Activated T-helper 2 cell treated with anti-CD3 and anti-CD28 coated beads, Interferon-gamma antibody, Interleukin-2, Interleukin-4, amounts not matched to agents 10 μg/mL and 5 μg/mL and 100 μg/mL, durations not matched to agents 14 hours and 24 hours and 36 hours (primary cell): ENCODE measurements at regions of chr5 and their contacts with region 1.

Region 1: GRCh38 chr5:138035605-138036537 is 3.0 kb upstream of the FAM13B start:
- DNase-seq: peak; percentile 54
- H3K4me3 Mint-ChIP-seq: peak overlapping the region; percentile 44
- H3K27ac Mint-ChIP-seq: no peak overlapping the region
- H3K4me1 Mint-ChIP-seq: peaks cover 37% of the 10 kb centered on the region
- H3K27me3 Mint-ChIP-seq: no peaks in the 10 kb centered on the region

Region 2: GRCh38 chr5:137754126-137754960 is 281.5 kb before region 1 on chr5 and contains the start of gene HNRNPA0:
- intact Hi-C with region 1: loop called (anchors 1 kb)
- DNase-seq: peak; percentile 96
- H3K4me3 Mint-ChIP-seq: peak within 1 kb of the TSS; percentile 99
- H3K27ac Mint-ChIP-seq: peak within 1 kb of the TSS; percentile 100
- H3K4me1 Mint-ChIP-seq: peaks cover 21% of the 10 kb centered on the region
- H3K27me3 Mint-ChIP-seq: no peaks in the 10 kb centered on the region
- total RNA-seq, gene HNRNPA0: 37.2 and 37.5 TPM in 2 replicates

Region 3: DNA sequence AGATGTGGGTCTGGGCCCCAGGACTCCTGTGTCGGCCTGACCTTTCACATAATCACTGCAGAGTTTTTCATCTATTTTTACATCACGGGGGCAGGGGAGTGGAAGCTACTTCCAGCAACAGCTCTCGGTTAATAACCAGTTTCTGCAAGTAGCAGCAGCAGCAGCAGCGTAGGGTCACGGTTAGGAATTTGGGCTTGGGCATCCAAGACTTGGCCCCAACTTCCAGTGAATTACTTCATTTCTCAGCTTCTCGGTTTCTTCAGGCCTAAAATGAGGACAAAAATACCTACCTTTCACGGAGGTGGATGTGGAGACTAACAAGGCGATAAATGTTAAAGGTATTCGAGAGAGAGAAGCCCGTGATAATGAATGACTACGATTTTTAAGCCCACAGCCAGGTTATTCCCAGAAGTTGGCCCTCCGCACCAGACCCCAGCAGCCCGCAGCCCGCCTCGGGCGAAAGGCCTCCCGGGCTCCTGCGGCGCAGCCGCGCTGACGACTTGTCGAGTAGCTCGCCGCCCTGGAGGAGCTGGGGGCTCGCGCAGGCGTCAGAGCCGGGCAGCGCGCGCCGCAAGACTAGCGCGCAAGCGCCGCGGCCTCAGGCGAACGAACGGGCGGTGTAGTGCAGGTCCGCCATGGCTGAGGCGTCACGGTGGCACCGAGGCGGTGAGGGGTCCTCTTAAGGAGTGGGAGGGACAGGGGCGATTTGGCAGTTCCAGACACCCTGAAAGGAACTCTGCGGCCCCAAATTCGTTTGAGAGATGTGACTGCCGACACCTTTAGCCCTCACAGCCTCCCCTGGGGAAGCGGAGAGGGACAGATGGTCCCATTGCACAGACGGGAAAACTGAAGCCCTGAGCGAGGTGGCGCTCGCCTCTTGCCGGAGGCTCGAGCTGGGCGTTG is 146.8 kb before region 1 on chr5 and contains the start of gene PKD2L2:
- intact Hi-C with region 1: loop called (anchors 10 kb)
- DNase-seq: peak; percentile 80
- H3K4me3 Mint-ChIP-seq: peak within 1 kb of the TSS; percentile 85
- H3K27ac Mint-ChIP-seq: peak within 1 kb of the TSS; percentile 91
- H3K4me1 Mint-ChIP-seq: peaks cover 17% of the 10 kb centered on the region
- H3K27me3 Mint-ChIP-seq: no peaks in the 10 kb centered on the region
- total RNA-seq, gene PKD2L2: not detected in 2 replicates

Region 4: DNA sequence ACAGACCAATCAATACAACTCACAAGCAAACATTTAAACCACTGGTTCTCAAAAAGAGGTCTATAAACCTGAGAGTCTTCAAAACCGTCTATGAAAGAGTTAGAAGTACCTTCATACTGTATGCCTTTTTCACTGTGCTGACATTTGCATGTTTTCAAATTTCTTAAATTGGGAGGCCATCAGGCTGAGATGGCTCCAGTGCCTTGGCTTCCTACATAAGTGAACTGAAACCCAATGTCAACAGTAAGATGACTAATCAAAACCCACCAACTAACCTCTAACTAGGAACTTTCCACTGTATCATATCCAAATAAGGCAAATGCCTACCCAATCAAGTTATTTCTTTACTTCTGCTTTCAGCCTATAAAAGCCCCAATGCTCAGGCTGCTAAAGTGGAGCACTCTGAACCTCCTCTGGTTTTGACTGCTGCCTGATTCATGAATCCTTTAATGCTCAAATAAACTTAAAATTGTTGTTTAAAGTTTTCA is 38.1 kb before region 1 on chr5:
- intact Hi-C with region 1: loop called (anchors 2 kb)
- DNase-seq: no peak
- H3K4me3 Mint-ChIP-seq: no peak overlapping the region
- H3K27ac Mint-ChIP-seq: peak overlapping the region; percentile 64
- H3K4me1 Mint-ChIP-seq: peaks cover 33% of the 10 kb centered on the region
- H3K27me3 Mint-ChIP-seq: no peaks in the 10 kb centered on the region

Region 5: DNA sequence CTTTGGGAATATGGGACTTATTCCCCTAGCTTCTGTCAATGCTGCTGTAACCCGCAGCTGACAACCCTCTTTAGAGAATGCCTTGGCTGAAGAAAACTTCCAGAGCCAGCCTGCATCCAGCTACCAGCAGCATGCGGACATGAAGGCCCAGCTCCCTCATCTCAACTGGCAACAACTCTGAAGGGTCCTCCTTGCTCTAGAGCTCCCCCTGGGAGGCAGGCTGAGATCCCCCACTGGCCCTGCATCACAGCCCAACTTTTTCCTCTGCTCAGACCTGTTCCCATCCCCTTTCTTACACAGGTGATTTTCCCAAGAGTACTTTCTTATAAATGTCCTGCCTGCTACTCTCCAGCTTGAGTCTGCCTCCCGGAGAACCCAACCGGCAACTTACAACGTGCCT is 29.2 kb after region 1 on chr5:
- intact Hi-C with region 1: loop called (anchors 1 kb)
- DNase-seq: no peak
- H3K4me3 Mint-ChIP-seq: no peak overlapping the region
- H3K27ac Mint-ChIP-seq: no peak overlapping the region
- H3K4me1 Mint-ChIP-seq: peaks cover 4% of the 10 kb centered on the region
- H3K27me3 Mint-ChIP-seq: no peaks in the 10 kb centered on the region

Region 6: GRCh38 chr5:138128334-138128733 is 92.5 kb after region 1 on chr5:
- intact Hi-C with region 1: loop called (anchors 1 kb)
- DNase-seq: no peak
- H3K4me3 Mint-ChIP-seq: no peak overlapping the region
- H3K27ac Mint-ChIP-seq: no peak overlapping the region
- H3K4me1 Mint-ChIP-seq: no peaks in the 10 kb centered on the region
- H3K27me3 Mint-ChIP-seq: peaks cover 15% of the 10 kb centered on the region

Region 7: GRCh38 chr5:138148811-138149210 is 112.9 kb after region 1 on chr5:
- intact Hi-C with region 1: no loop called
- DNase-seq: no peak
- H3K4me3 Mint-ChIP-seq: no peak overlapping the region
- H3K27ac Mint-ChIP-seq: no peak overlapping the region
- H3K4me1 Mint-ChIP-seq: no peaks in the 10 kb centered on the region
- H3K27me3 Mint-ChIP-seq: peaks cover 2% of the 10 kb centered on the region

Region 8: DNA sequence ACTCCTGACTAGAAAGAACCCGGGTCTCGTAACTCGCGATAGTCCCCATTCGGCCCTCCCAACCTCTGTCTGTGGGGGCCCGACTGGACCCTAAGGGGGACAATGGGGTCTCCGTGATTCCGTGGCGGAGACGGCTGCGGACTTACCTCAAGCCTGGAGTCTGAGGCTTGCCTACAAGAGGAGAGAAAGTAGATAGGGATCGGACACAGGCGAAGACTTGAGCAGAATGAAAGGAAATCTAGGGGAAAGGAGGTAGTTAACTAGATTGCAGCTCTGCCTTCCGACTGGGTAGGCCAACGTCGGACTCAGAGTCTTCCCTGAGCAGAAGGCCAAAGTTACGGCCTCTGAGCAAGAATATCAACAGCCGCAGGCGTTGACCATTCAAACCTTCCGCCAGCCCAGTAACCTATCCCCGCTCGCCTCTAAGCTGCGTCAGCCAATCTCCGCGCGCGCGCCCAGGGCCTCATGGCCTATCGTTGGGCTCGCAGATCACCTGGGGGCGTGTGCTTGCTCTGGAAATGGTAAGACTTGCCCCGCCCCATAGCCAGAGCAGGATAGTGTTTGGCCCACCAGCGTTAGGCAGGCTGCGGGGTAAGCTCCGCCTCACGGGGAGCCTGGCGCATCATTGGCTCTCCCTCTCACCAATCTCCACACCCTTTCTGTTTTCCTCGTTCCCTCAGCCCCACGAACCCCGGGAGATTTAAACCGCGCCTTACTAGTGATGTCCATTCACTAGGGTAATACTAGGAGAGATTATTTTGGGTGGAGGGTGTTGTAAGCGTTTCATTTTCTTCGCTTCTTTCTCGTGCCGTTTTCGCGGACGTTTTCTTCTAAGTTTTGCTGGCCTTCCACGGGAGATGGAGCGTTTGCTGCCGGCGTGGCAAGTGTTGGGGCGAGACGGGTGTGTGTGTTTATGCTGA is 295.8 kb after region 1 on chr5 and contains the start of gene CDC25C:
- intact Hi-C with region 1: loop called (anchors 10 kb)
- DNase-seq: peak; percentile 98
- H3K4me3 Mint-ChIP-seq: peak within 1 kb of the TSS; percentile 83
- H3K27ac Mint-ChIP-seq: peak within 1 kb of the TSS; percentile 86
- H3K4me1 Mint-ChIP-seq: peaks cover 21% of the 10 kb centered on the region
- H3K27me3 Mint-ChIP-seq: no peaks in the 10 kb centered on the region
- total RNA-seq, gene CDC25C: 8.4 and 9.0 TPM in 2 replicates